ENCODE measurements at regions of chr17 and their contacts with region 1.

Region 1: GRCh38 chr17:49508061-49508865 is 13.2 kb downstream of the NGFR start:
- DNase-seq: peak in 2 of 3 donors; percentile 20 to 29
- H3K4me3 ChIP-seq: no peak overlapping the region
- H3K27ac ChIP-seq: no peak overlapping the region
- H3K4me1 ChIP-seq: peaks cover 0 to 11% (median 0%) of the 10 kb centered on the region in 4 experiments
- H3K27me3 ChIP-seq: peaks cover 0 to 38% (median 14%) of the 10 kb centered on the region in 5 experiments

Region 2: DNA sequence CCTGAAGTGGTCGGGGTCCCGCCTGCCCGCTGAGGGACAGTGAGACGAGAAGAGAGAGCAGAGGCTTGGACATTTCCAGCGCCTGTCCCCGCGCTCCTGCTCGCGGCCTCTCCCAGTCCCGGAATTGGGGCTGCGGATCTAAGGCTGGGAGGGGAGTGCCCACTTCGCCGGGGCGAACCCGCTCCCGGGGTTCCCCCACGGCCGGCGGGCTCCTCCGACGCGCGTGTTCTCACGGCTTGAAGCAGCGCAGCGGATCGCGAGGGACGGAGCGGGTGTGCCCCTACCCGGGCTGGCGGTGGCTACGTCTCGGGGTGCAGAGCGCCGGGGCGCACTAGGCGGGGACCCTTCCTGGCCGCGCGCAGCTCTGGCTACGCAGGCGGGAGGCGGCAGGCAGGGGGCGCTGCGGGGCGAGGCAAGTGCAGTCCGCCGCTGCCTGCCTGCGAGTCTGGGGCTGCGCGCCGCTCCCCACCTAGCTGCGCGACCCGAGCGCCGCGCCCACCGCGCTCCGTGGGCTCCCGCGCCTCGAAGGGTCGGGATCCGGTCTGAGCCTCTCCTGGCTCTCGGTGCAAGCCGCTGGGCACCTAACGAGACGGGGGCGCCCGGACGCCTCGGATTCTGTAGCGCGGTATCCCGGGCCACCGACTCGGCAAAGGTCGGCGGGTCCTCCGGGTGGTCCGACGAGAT is 11.9 kb before region 1 on chr17:
- CTCF ChIA-PET with region 1: interaction called, 13 read pairs
- POLR2A ChIA-PET with region 1: no interaction called
- DNase-seq: peak; percentile 67 to 81 (median 79)
- H3K4me3 ChIP-seq: peak overlapping the region in 6 of 7 experiments; percentile 16 to 79 (median 53)
- H3K27ac ChIP-seq: no peak overlapping the region
- H3K4me1 ChIP-seq: peaks cover 0 to 32% (median 25%) of the 10 kb centered on the region in 4 experiments
- H3K27me3 ChIP-seq: peaks cover 17 to 60% (median 37%) of the 10 kb centered on the region in 5 experiments

Measured in common myeloid progenitor, CD34-positive (primary cell).